ENCODE measurements at regions of chr10 and their contacts with region 1.

Region 1: DNA sequence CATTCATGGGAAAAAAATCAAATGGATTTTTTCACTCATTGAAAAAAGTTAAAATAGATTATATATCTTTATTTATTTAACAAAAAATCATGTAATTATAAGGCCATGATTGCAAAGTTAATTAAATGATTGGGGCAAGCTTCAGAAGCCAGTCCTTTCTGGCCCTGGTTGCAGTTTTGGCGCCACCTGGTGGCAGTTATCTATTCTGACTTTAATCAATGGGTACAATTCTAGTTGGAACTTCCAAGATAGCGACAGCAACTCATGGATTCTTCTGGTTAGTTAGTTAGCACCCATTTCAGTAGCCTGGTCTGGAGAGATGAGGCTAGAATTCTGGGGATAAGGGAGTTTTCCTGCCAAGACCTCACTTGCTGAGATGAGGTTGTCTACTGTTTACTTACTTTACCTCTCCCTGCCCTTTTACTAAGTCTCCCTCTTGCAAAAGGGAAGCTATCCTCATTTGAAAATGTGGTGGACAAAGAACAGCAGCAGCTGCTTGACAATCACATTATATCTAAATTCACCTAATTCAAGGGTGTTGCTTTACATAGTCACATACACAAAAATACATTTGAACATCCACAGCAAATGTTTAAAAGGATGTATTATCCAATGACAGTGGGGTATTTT is 42.3 kb downstream of the NOC3L start:
- DNase-seq: peak; percentile 16 to 67 (median 39)
- H3K4me3 ChIP-seq: no peak overlapping the region
- H3K4me3 Mint-ChIP-seq: no peak overlapping the region
- H3K27ac ChIP-seq: no peak overlapping the region
- H3K27ac Mint-ChIP-seq: peak overlapping the region in 1 of 8 donors; percentile 54
- H3K4me1 ChIP-seq: no peaks in the 10 kb centered on the region
- H3K4me1 Mint-ChIP-seq: no peaks in the 10 kb centered on the region
- H3K27me3 ChIP-seq: no peaks in the 10 kb centered on the region
- H3K27me3 Mint-ChIP-seq: no peaks in the 10 kb centered on the region

Region 2: DNA sequence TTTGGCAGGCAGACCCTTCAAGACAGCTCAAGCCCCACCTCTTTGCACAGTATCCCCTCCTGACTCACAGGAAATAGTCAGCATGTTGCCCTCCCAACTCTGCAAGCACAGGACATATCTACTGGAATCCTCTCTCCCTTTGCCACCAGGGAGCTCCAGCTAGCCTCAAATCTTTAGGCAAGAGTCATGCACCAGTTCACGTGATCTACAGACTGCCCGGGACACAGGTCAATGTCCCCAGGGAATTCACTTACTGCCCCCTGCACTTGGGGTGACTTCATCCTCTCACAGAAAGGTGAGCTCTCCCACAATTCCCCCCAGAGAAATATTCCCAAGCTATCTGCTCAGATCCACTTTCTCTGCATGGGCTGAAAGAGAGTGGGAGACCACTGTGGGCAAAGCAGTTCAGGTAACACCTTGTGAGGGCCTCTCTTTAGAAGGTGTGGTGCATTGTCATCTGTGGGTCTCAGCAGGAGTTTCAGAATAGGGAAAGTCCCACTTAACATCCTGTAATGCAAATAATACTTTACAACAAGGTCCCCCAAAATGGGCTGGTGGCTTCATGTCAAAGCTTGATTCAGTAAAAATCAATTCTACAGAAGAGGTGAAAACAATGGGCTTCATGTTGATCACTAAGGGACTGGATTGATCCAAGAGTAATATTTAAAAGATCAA is 87.6 kb before region 1 on chr10:
- CTCF ChIA-PET with region 1: no interaction called
- POLR2A ChIA-PET with region 1: no interaction called
- DNase-seq: no peak
- H3K4me3 ChIP-seq: no peak overlapping the region
- H3K4me3 Mint-ChIP-seq: no peak overlapping the region
- H3K27ac ChIP-seq: no peak overlapping the region
- H3K27ac Mint-ChIP-seq: no peak overlapping the region
- H3K4me1 ChIP-seq: no peaks in the 10 kb centered on the region
- H3K4me1 Mint-ChIP-seq: no peaks in the 10 kb centered on the region
- H3K27me3 ChIP-seq: no peaks in the 10 kb centered on the region
- H3K27me3 Mint-ChIP-seq: peaks cover 6 to 19% of the 10 kb centered on the region in 2 donors

Region 3: DNA sequence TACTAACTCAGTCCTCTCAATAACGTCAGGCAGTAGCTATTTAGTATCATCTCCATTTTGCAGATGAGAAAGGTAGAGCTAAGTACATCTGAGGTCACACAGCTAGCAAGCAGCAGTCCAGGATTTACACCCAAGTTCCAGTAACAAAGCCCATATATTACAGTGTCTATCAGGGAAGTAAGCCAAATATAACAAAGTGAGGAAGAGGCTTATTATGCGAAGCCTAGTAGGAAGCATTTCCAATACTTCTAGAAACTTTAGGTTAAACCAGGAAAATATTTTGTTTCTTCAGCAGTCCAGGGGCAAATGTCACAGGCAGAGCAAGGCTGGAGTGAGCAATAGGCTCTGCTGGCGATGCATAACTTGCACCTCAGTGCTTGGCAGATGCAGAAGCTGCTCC is 11.5 kb before region 1 on chr10:
- CTCF ChIA-PET with region 1: interaction called, 11 read pairs
- POLR2A ChIA-PET with region 1: no interaction called
- DNase-seq: no peak
- H3K4me3 ChIP-seq: no peak overlapping the region
- H3K4me3 Mint-ChIP-seq: no peak overlapping the region
- H3K27ac ChIP-seq: no peak overlapping the region
- H3K27ac Mint-ChIP-seq: no peak overlapping the region
- H3K4me1 ChIP-seq: no peaks in the 10 kb centered on the region
- H3K4me1 Mint-ChIP-seq: no peaks in the 10 kb centered on the region
- H3K27me3 ChIP-seq: peaks cover 7% of the 10 kb centered on the region
- H3K27me3 Mint-ChIP-seq: peaks cover 20 to 61% of the 10 kb centered on the region in 2 donors

Region 4: DNA sequence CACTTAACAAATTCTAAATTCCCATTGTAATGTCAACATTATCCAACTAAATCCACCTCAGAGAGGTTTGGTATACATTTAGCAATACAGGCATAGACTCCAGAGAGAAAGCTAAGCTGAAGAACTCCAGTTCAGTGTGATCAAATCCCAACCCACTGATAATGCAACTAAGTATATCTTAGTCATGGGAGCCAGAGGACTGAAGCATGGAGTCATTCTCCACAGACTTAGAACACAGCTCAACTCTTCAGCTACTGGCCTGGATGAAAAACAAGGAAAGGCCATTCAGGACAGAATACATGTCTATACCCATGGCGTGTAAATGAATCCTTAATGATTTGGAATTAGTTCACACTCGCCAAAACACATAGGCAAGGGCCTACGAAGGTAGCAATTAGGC is 14.5 kb after region 1 on chr10:
- CTCF ChIA-PET with region 1: interaction called, 32 read pairs
- POLR2A ChIA-PET with region 1: no interaction called
- DNase-seq: no peak
- H3K4me3 ChIP-seq: no peak overlapping the region
- H3K4me3 Mint-ChIP-seq: no peak overlapping the region
- H3K27ac ChIP-seq: no peak overlapping the region
- H3K27ac Mint-ChIP-seq: peak overlapping the region in 1 of 8 donors; percentile 21
- H3K4me1 ChIP-seq: no peaks in the 10 kb centered on the region
- H3K4me1 Mint-ChIP-seq: no peaks in the 10 kb centered on the region
- H3K27me3 ChIP-seq: no peaks in the 10 kb centered on the region
- H3K27me3 Mint-ChIP-seq: no peaks in the 10 kb centered on the region

Region 5: DNA sequence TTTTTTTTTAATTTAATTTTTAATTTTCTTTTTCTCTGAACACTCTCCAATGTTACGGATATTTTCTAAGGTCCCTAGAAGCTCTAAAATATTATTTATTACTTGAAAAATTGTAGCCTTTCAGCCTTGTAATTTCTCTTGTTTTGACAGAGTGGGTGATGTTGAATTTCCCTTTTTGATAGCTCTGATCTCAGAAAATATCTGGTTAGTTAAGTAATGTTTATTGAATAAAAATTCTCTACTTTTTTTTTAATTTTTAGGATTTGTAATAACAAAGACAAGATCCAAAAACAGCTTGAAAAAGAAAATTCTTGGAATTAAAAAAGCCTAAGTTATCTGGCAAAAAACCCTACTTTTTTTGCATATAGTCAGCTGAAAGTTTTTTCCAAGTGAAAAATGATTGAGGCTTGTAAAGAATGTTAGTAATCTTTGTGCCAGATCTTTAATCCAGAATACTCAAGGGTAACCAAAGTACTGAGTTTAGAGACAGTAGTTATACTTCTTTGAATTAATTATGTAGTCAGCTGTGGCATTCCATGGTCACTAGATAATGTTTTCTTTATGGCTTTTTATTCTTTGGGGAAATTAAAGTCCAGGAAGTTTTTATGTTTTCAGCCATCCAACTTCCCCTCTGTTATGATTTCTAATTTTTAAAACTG is 108.8 kb after region 1 on chr10:
- CTCF ChIA-PET with region 1: no interaction called
- POLR2A ChIA-PET with region 1: no interaction called
- DNase-seq: no peak
- H3K4me3 ChIP-seq: no peak overlapping the region
- H3K4me3 Mint-ChIP-seq: no peak overlapping the region
- H3K27ac ChIP-seq: no peak overlapping the region
- H3K27ac Mint-ChIP-seq: no peak overlapping the region
- H3K4me1 ChIP-seq: no peaks in the 10 kb centered on the region
- H3K4me1 Mint-ChIP-seq: no peaks in the 10 kb centered on the region
- H3K27me3 ChIP-seq: no peaks in the 10 kb centered on the region
- H3K27me3 Mint-ChIP-seq: peaks cover 5 to 49% of the 10 kb centered on the region in 2 donors

Region 6: DNA sequence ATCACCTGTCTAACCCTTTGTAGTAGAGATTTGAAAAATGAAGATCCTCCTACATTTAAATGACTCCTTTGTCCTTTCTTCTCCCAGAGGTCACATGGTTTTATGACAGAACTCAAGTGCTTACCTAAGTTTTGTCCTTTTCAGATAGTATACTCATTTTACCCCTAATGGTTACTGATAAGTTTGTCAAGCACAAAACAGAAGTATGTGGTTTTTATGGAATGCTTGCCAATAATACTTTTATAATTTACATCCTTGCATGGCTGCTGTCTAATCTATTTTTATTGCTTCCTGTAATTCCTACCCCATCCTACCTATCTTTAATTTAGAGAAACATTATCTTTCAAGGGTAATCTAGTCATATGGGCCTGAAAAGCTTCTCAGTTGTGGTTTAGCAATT is 262.7 kb after region 1 on chr10:
- CTCF ChIA-PET with region 1: no interaction called
- POLR2A ChIA-PET with region 1: no interaction called
- DNase-seq: no peak
- H3K4me3 ChIP-seq: no peak overlapping the region
- H3K4me3 Mint-ChIP-seq: no peak overlapping the region
- H3K27ac ChIP-seq: no peak overlapping the region
- H3K27ac Mint-ChIP-seq: no peak overlapping the region
- H3K4me1 ChIP-seq: no peaks in the 10 kb centered on the region
- H3K4me1 Mint-ChIP-seq: no peaks in the 10 kb centered on the region
- H3K27me3 ChIP-seq: no peaks in the 10 kb centered on the region
- H3K27me3 Mint-ChIP-seq: no peaks in the 10 kb centered on the region